Activated CD4-positive, alpha-beta memory T cell treated with anti-CD3 and anti-CD28 coated beads for 36 hours (primary cell): ENCODE measurements at regions of chr4 and their contacts with region 1.

Region 1: DNA sequence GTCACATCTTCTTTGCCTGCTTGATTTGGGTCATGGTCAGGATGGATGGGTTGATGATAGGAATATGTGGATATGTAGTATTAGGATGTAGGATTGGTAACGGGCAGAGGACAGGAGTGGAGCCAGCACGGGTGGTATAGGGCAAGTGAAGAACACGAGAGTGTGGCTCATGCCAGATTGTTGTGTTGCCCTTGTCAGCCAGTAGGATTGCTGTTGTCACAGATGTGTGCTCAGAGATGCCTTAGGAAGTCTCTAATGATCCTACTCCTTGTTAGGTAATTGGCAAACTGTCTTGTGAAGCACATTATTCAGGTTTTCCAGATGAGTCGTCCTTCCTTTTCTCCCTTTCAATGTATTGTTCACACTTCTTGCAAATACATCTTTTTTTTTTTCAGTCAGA is 5.5 kb downstream of the ATP10D start:
- DNase-seq: no peak
- H3K4me3 Mint-ChIP-seq: no peak overlapping the region
- H3K27ac Mint-ChIP-seq: no peak overlapping the region
- H3K4me1 Mint-ChIP-seq: peaks cover 17% of the 10 kb centered on the region
- H3K27me3 Mint-ChIP-seq: no peaks in the 10 kb centered on the region

Region 2: DNA sequence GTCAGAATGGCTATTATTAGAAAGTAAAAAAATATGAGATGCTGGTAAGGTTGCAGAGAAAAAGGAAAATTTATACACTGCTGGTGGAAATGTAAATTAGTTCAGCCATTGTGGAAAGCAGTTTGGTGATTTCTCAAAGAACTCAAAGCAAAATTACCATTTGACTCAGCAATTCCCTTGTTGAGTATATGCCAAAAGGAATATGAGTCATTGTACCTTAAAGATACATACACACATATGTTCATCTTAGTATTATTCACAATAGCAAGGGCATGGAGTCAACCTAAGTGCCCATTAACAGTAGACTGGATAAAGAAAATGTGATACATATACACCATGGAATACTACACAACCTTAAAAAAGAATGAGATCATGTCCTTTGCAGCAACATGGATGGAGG is 175.2 kb before region 1 on chr4:
- CTCF ChIA-PET with region 1: no interaction called
- POLR2A ChIA-PET with region 1: no interaction called
- intact Hi-C with region 1: loop called (anchors 10 kb)
- DNase-seq: no peak
- H3K4me3 Mint-ChIP-seq: no peak overlapping the region
- H3K27ac Mint-ChIP-seq: no peak overlapping the region
- H3K4me1 Mint-ChIP-seq: no peaks in the 10 kb centered on the region
- H3K27me3 Mint-ChIP-seq: peaks cover 8% of the 10 kb centered on the region